Thyroid gland (tissue), 4 donors: ENCODE measurements at regions of chr14 and their contacts with region 1.

Region 1: DNA sequence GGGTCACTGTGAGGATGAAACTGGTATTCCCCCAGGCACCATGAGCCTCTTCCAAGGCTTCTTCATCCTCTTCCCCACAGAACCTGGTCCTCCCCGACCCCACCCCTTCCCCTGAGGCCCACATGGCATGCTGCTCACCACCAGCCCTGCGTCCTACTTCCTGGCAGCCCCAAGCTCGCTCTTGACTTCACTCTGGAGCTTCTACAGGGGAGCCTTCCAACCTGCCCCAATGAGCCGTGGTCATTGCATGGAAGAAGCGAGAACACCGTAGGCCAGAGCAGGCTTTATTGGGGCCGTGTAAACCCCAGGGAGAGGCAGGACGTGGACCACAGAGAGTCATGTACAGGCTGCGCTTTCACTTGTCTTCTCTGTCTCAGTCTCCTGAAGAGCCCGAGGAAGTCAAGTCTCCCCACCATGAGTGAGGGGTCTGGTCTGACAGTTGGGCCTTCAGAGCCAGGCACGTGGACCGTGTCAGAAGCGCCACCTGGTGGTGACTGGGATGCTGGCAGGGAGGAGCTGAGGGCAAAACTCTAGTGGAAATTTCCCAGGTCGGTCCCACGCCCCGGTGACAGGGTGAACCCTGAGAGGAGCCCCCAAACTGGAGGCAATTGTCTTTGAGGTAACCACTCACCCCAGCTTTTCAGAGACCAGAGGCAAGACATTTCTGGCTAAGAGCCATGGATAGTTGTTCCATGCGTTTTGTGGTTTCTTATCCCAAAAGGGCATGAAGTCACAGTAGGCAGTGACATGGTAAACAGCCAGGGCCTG is 17.5 kb downstream of the RPS6KL1 start:
- DNase-seq: peak; percentile 66 to 77
- H3K4me3 ChIP-seq: no peak overlapping the region
- H3K27ac ChIP-seq: no peak overlapping the region
- H3K4me1 ChIP-seq: peaks cover 13 to 17% of the 10 kb centered on the region in 2 donors
- H3K27me3 ChIP-seq: no peaks in the 10 kb centered on the region
- CTCF ChIP-seq: peak; percentile 80 to 94 (median 84)
- POLR2A ChIP-seq: no peak

Region 2: DNA sequence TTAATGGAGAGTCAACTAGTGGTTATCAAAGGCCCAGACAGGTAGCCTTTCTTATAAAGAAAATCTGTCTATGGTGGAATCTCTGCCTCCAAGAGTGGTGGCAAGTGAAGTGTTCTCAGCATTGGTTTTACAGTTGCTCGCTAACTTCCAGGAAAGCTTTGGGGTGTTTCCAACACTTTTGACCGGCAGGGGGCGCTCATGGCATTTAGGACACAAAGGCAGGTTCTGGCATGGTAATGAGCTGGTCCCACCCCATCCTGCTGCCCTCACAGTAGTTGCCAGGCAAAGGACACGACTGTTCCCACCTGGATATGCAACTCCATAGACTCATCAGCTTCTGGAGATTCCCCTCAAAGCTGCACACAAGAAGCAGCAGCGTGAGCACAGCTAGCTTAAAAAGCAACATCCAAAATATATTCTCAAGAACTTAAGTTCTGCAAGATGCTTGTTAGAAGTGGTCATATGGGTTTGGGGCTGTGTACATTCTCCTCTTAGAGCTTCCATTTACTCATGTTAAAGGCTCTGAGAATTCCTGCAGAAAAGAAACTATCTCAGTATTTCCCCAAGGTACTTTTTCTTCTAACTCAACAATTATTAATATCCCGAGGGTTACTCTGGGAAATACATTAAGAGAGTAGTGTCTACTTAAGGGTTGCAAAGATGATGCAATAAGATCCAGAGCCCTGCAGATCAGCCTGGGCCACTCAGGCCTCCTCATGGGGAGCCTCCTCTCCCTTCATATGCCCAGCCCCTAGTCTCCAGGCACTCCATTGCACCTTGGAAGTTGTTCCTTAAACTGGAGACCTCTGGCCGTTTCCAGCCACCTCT is 44.4 kb before region 1 on chr14:
- intact Hi-C with region 1: loop called (anchors 5 kb)
- DNase-seq: peak; percentile 92 to 95
- H3K4me3 ChIP-seq: no peak overlapping the region
- H3K27ac ChIP-seq: no peak overlapping the region
- H3K4me1 ChIP-seq: peaks cover 0 to 14% of the 10 kb centered on the region in 2 donors
- H3K27me3 ChIP-seq: no peaks in the 10 kb centered on the region
- CTCF ChIP-seq: peak; percentile 75 to 94 (median 86)
- POLR2A ChIP-seq: no peak